SK-N-SH (cell line): ENCODE measurements at regions of chr5 and their contacts with region 1.

Region 1: DNA sequence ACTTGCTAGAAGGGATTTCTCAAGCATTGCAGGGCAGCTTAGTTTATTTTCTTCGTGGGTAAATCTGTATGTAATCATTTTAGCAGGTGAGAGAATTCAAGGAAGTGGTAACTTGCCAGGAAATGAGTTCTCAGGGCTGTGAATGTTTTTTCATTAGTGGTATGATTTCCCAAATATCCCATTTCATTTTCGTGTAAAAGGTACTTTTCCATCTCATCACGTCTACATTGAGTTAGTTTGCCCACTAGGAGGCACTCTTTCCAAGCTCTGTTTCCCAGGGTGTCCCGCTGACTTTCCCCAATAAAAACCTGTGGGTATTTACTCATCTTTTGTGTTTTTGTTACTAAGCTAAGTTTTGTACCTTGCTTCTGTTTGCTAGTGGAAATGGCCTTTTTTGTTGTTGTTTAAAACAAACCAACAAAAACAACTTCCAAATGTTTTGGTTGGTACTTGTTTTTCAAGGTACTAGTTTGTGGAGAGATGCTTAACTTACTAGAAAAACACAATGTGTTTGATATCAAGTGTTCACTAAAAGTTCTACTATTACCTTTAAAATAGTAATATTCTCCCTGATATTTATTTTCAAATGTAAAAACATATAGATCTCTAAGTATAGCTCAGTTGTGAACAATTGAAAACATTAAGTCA is 373.6 kb downstream of the ADGRV1 start:
- DNase-seq: peak; percentile 77
- H3K4me3 ChIP-seq: no peak overlapping the region; a peak in 1 of 4 replicates
- H3K27ac ChIP-seq: no peak overlapping the region
- H3K4me1 ChIP-seq: no peaks in the 10 kb centered on the region; a peak in 2 of 4 replicates
- H3K27me3 ChIP-seq: no peaks in the 10 kb centered on the region
- CTCF ChIP-seq: peak; percentile 85
- EP300 ChIP-seq: 0 out of 4 replicates have a peak, but pooled peaks of 1 of the 2 experiments have one; percentile 30
- RAD21 ChIP-seq: peak; percentile 96

Region 2: DNA sequence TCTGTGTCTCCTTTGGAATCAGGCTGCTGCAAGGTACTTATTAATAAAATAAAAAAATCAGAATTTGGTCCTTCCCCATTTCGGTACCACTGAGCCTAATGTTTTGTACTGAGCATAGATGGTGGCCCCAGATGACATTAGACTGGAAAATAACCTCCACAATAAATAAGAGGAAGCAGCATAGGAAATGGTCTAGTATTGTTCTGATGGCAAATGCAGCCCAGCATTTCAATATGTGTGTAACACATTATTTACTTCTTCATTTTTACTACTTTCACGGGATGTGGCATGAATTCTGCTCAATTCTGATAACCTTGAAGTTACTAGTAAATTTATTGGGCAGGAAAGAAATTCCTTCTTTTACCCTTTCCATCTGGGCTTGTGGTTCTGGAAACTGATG is 78.0 kb before region 1 on chr5:
- CTCF ChIA-PET with region 1: no interaction called
- POLR2A ChIA-PET with region 1: no interaction called
- DNase-seq: no peak
- H3K4me3 ChIP-seq: no peak overlapping the region
- H3K27ac ChIP-seq: no peak overlapping the region
- H3K4me1 ChIP-seq: peaks cover 0 to 2% of the 10 kb centered on the region in 2 experiments; a peak in 2 of 4 replicates
- H3K27me3 ChIP-seq: no peaks in the 10 kb centered on the region
- CTCF ChIP-seq: no peak
- EP300 ChIP-seq: no peak
- RAD21 ChIP-seq: no peak

Region 3: GRCh38 chr5:90916947-90917800 is 15.0 kb before region 1 on chr5:
- CTCF ChIA-PET with region 1: interaction called, 21 read pairs
- POLR2A ChIA-PET with region 1: no interaction called
- DNase-seq: no peak
- H3K4me3 ChIP-seq: no peak overlapping the region
- H3K27ac ChIP-seq: no peak overlapping the region
- H3K4me1 ChIP-seq: no peaks in the 10 kb centered on the region; a peak in 2 of 4 replicates
- H3K27me3 ChIP-seq: no peaks in the 10 kb centered on the region
- CTCF ChIP-seq: no peak
- EP300 ChIP-seq: no peak
- RAD21 ChIP-seq: no peak

Region 4: DNA sequence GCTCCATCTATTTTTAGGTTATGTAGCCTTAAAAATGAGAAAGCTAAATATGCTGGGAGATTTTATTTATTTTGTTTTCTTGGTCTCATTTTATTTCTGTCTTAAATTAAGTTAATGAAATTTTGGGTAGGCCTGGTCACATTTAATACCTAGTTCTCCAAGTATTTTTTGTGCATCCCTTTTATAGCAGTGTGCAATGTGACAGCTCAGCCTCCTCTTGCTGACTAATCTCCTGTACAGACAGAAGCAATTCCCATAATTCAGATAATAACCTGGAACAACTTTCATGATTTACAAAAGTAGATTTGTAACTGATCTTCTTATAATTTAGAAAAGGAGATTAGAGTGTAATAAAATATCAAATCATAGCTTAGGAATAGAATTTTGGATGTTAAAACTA is 30.3 kb after region 1 on chr5:
- CTCF ChIA-PET with region 1: interaction called, 13 read pairs
- POLR2A ChIA-PET with region 1: no interaction called
- DNase-seq: no peak
- H3K4me3 ChIP-seq: no peak overlapping the region
- H3K27ac ChIP-seq: peak overlapping the region in 1 of 2 experiments; percentile 16; a peak in 2 of 4 replicates
- H3K4me1 ChIP-seq: peaks cover 0 to 5% of the 10 kb centered on the region in 2 experiments; a peak in 2 of 4 replicates
- H3K27me3 ChIP-seq: no peaks in the 10 kb centered on the region
- CTCF ChIP-seq: no peak
- EP300 ChIP-seq: no peak
- RAD21 ChIP-seq: no peak

Region 5: GRCh38 chr5:90983148-90983547 is 51.0 kb after region 1 on chr5:
- CTCF ChIA-PET with region 1: interaction called, 12 read pairs
- POLR2A ChIA-PET with region 1: no interaction called
- DNase-seq: peak; percentile 65
- H3K4me3 ChIP-seq: no peak overlapping the region
- H3K27ac ChIP-seq: peak overlapping the region in 1 of 2 experiments; percentile 96; a peak in 2 of 4 replicates
- H3K4me1 ChIP-seq: peaks cover 0 to 19% of the 10 kb centered on the region in 2 experiments; a peak in 2 of 4 replicates
- H3K27me3 ChIP-seq: no peaks in the 10 kb centered on the region
- CTCF ChIP-seq: no peak
- EP300 ChIP-seq: peak; percentile 56 to 98; a peak in 3 of 4 replicates
- RAD21 ChIP-seq: peak; percentile 21; the same call in 1 of the 2 replicates